ENCODE measurements at regions of chr7 and their contacts with region 1.

Region 1: GRCh38 chr7:5780801-5781496 is 514 bp downstream of the RNF216 start:
- DNase-seq: peak; percentile 52
- ATAC-seq: peak; percentile 56
- H3K4me3 Mint-ChIP-seq: peak overlapping the region; percentile 80
- H3K27ac Mint-ChIP-seq: peak overlapping the region; percentile 92
- H3K4me1 Mint-ChIP-seq: peaks cover 40% of the 10 kb centered on the region
- H3K27me3 Mint-ChIP-seq: no peaks in the 10 kb centered on the region

Region 2: GRCh38 chr7:5704534-5704922 is 76.4 kb before region 1 on chr7:
- CTCF ChIA-PET with region 1: interaction called, 10 read pairs
- POLR2A ChIA-PET with region 1: no interaction called
- DNase-seq: peak; percentile 80
- ATAC-seq: no peak
- H3K4me3 Mint-ChIP-seq: no peak overlapping the region
- H3K27ac Mint-ChIP-seq: no peak overlapping the region
- H3K4me1 Mint-ChIP-seq: peaks cover 35% of the 10 kb centered on the region
- H3K27me3 Mint-ChIP-seq: no peaks in the 10 kb centered on the region

Region 3: GRCh38 chr7:5755704-5756504 is 25.0 kb before region 1 on chr7:
- CTCF ChIA-PET with region 1: no interaction called
- POLR2A ChIA-PET with region 1: no interaction called
- DNase-seq: no peak
- ATAC-seq: no peak
- H3K4me3 Mint-ChIP-seq: no peak overlapping the region
- H3K27ac Mint-ChIP-seq: no peak overlapping the region
- H3K4me1 Mint-ChIP-seq: peaks cover 7% of the 10 kb centered on the region
- H3K27me3 Mint-ChIP-seq: no peaks in the 10 kb centered on the region

Region 4: GRCh38 chr7:5766321-5766761 is 14.6 kb before region 1 on chr7:
- CTCF ChIA-PET with region 1: interaction called, 16 read pairs
- POLR2A ChIA-PET with region 1: interaction called, 4 read pairs
- DNase-seq: no peak
- ATAC-seq: no peak
- H3K4me3 Mint-ChIP-seq: no peak overlapping the region
- H3K27ac Mint-ChIP-seq: no peak overlapping the region
- H3K4me1 Mint-ChIP-seq: peaks cover 4% of the 10 kb centered on the region
- H3K27me3 Mint-ChIP-seq: no peaks in the 10 kb centered on the region

Region 5: GRCh38 chr7:5793361-5794072 is 12.6 kb after region 1 on chr7:
- CTCF ChIA-PET with region 1: interaction called, 11 read pairs
- POLR2A ChIA-PET with region 1: no interaction called
- DNase-seq: no peak
- ATAC-seq: no peak
- H3K4me3 Mint-ChIP-seq: no peak overlapping the region
- H3K27ac Mint-ChIP-seq: no peak overlapping the region
- H3K4me1 Mint-ChIP-seq: peaks cover 13% of the 10 kb centered on the region
- H3K27me3 Mint-ChIP-seq: no peaks in the 10 kb centered on the region

Measured in activated CD8-positive, alpha-beta T cell treated with anti-CD3 and anti-CD28 coated beads, Interleukin-2, amount 10 ng/mL, durations not matched to agents 7 days and 5 days (primary cell).